Activated naive CD4-positive, alpha-beta T cell treated with anti-CD3 and anti-CD28 coated beads for 36 hours (primary cell): ENCODE measurements at regions of chr16 and their contacts with region 1.

Region 1: DNA sequence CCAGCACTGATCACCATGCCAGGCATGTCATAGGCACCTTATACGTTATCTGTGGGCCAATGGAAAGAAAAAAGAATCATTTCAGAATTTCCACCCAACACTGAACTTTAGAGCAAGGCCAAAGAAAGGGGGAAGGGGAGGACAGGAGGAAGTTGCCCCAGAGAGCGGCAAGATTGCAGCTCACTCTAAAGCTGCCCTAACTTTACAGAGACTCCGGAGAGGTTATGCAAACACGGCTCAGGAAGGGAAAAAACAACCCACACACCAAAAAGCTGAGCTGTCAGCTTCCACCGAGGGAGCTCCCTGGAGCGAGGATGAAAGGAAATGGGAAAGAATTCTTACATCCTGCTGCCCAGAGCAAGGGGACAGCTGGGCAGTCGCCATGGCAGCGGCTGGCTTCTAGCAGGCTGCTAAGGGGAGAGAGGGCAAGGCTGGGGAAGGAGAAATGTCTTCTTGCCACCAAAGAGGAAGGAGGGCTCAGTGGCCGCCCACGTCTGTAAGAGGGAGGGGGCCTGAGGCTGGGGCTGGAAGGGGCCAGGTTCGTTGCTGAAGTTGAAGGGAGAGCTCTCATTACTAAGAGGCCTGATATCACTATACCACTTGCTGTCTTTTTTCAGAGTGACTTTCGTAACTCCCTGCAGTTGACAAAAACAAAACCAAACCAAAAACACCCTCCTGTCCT is 18.2 kb downstream of the COTL1 start:
- DNase-seq: peak; percentile 83
- H3K4me3 Mint-ChIP-seq: peak overlapping the region; percentile 75
- H3K27ac Mint-ChIP-seq: peak overlapping the region; percentile 90
- H3K4me1 Mint-ChIP-seq: peaks cover 91% of the 10 kb centered on the region
- H3K27me3 Mint-ChIP-seq: no peaks in the 10 kb centered on the region

Region 2: DNA sequence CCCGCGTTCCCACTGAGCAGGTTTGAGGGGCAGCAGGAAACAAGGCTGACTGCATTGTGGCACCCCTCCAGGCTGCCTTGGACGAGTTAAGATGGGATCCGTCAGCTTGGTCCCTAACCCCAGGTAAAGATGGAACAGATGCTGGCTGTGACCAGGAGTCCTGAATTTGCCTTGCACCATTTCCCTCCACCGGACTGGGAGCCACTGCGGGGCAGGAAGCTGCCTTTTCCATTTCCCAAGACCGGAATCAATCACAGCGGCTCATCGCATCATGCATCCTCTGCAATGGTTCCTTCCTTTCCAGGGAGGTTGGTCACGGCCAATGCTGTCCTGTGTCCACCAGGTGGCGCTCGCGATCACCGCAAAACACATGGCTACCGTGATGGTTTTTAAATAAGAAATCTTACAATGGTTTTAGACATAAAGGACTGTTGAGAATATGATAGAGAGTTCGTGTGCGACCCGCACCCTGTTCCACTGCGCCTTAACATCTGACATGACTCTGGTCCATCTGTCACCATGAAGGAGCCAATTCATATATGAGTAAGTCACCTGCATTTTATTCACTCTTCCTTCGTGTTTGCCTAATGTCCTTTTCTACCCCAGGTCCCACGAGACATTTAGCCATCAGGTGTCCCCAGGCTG is 88.4 kb before region 1 on chr16:
- CTCF ChIA-PET with region 1: interaction called, 12 read pairs
- intact Hi-C with region 1: loop called (anchors 1 kb)
- DNase-seq: peak; percentile 86
- H3K4me3 Mint-ChIP-seq: no peak overlapping the region
- H3K27ac Mint-ChIP-seq: no peak overlapping the region
- H3K4me1 Mint-ChIP-seq: peaks cover 64% of the 10 kb centered on the region
- H3K27me3 Mint-ChIP-seq: no peaks in the 10 kb centered on the region

Region 3: GRCh38 chr16:84548971-84549844 is 50.5 kb before region 1 on chr16:
- CTCF ChIA-PET with region 1: interaction called, 5 read pairs
- intact Hi-C with region 1: loop called (anchors 1 kb)
- DNase-seq: peak; percentile 65
- H3K4me3 Mint-ChIP-seq: peak overlapping the region; percentile 86
- H3K27ac Mint-ChIP-seq: peak overlapping the region; percentile 97
- H3K4me1 Mint-ChIP-seq: peaks cover 62% of the 10 kb centered on the region
- H3K27me3 Mint-ChIP-seq: no peaks in the 10 kb centered on the region

Region 4: DNA sequence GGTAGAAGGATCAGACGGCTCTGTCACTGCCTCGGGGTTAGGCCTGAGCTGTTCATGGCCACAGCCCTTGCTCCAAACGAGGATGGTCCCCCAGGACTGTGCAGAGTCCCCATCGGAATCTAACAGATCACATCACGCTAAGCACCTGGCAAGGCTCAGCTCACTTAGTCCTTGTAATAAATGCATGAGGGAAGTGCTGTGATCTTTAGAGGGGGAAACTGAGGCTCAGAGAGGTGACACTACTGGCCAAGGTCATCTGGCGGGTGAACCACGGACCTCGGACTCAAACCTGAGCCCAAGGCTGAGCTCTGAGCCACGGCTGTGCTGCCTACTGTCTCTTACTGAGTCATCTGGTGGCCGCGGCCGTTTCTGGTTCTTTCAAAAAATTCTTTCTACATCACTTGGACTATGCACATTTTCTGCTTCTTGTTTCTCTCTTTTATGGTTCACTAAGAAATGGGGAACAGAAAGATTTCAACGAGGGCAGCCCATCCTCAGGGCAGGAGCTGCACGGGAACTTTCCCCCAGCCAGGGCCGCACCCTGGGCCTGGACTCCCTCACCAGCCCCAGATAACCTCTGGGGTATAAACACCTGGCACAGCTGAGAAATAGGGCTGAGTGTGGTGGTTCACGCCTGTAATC is 37.4 kb before region 1 on chr16:
- CTCF ChIA-PET with region 1: no interaction called
- intact Hi-C with region 1: no loop called
- DNase-seq: no peak
- H3K4me3 Mint-ChIP-seq: no peak overlapping the region
- H3K27ac Mint-ChIP-seq: no peak overlapping the region
- H3K4me1 Mint-ChIP-seq: no peaks in the 10 kb centered on the region
- H3K27me3 Mint-ChIP-seq: no peaks in the 10 kb centered on the region

Region 5: DNA sequence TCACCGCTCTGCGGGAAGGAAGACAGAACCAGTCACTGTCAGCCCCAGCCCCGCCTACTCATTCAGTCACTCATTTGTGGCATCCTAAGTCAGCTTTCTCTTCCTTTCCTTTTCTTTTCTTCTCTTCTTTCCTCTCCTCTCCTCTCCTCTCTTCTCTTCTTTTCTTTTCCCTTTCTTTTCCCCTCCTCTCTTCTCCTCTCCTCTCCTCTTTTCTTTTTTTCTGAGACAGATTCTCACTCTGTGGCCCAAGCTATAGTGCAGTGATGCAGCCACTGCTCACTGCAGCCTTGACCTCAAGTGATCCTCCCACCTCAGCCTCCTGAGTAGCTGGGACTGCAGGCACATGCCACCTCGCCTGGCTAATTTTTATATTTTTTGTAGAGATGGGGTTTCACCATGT is 38.0 kb after region 1 on chr16:
- CTCF ChIA-PET with region 1: no interaction called
- intact Hi-C with region 1: no loop called
- DNase-seq: no peak
- H3K4me3 Mint-ChIP-seq: no peak overlapping the region
- H3K27ac Mint-ChIP-seq: peak overlapping the region; percentile 31
- H3K4me1 Mint-ChIP-seq: peaks cover 44% of the 10 kb centered on the region
- H3K27me3 Mint-ChIP-seq: no peaks in the 10 kb centered on the region